ENCODE measurements at regions of chr21 and their contacts with region 1.

Region 1: GRCh38 chr21:31098576-31099005 is 60.3 kb upstream of the KRTAP19-8 start:
- DNase-seq: peak; percentile 18
- ATAC-seq: peak; percentile 95
- H3K4me3 ChIP-seq: no peak overlapping the region
- H3K27ac ChIP-seq: no peak overlapping the region
- H3K4me1 ChIP-seq: no peaks in the 10 kb centered on the region
- H3K27me3 ChIP-seq: no peaks in the 10 kb centered on the region
- CTCF ChIP-seq: peak; percentile 87
- EP300 ChIP-seq: no peak
- POLR2A ChIP-seq: no peak
- RAD21 ChIP-seq: peak; percentile 53; the same call in 1 of the 2 replicates

Region 2: DNA sequence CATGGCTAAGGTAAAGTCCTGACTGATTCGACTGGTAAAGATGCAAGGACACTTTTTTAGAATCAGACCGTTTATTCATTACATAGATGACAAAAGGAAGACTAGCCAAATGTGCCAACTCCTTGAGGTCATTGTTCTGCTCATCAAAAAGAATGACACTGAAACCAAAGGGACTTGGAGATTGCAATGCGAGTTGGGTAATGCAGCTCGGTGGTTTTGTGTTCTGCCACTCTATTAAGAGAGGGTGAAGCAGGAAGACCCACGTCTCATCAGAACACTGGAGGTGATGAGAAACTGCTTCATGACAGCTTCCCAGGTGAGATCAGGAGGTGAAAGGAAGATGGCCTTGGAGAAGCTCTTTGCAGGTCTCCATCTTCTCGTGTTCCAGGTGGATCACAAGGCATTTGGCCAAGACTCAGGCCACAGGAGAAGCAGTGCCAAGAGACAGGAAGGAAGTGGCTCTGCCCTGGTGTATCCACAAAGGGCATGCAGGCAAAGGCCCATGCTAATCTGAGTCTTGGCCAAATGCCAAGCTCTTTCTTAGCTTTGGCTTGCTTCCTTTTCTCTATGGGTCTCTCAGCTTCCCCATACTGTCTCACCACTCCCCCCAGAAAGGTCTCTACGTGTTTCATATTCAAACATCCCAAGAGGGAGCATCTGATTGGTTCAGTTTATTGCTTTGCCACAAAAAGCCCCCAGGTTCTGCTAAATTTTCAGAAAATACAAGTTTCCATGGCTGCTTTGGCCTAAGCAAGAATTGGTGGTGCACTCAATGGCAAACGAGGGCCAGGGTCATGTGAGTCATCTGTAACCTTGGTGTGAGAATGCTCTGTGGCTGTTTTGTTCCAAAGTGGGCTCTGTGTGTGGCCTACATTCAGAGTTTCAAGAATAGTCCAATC is 2019.5 kb before region 1 on chr21:
- CTCF ChIA-PET with region 1: no interaction called
- POLR2A ChIA-PET with region 1: no interaction called
- in situ Hi-C with region 1: loop called (anchors 25 kb)
- intact Hi-C with region 1: no loop called
- DNase-seq: no peak
- ATAC-seq: peak; percentile 78
- H3K4me3 ChIP-seq: no peak overlapping the region
- H3K27ac ChIP-seq: no peak overlapping the region
- H3K4me1 ChIP-seq: peaks cover 36% of the 10 kb centered on the region; the same call in 1 of the 2 replicates
- H3K27me3 ChIP-seq: no peaks in the 10 kb centered on the region; a peak in 1 of 5 replicates
- CTCF ChIP-seq: no peak
- EP300 ChIP-seq: no peak
- POLR2A ChIP-seq: no peak
- RAD21 ChIP-seq: no peak

Region 3: DNA sequence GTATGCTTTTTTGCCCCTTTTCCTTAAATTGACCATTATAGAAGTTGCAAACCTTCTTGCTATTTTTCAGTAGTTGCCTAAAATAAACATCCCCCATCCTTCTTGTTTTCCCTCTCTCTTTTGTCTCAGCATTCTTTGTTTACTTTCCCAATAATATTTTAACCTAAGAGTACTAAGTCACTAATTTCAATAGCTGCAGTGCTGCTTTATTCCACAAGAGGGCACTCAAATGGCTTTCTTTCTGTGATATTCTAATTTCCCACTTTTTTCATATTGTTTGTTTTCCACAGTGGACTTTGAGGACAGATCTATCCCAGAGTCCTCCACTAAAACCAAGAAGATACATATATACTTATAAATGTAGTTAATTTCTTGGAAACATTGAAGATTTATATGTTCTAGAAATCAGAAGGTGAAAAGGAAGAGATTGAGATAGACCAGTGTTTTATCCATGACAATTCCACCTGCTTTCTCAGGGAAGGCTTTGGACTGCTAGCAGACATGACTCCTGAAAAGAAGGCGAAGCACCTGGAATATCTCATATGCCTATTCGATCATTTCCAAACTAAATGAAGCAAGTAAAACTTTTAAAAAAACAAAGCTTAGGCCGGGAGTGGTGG is 1054.0 kb before region 1 on chr21:
- CTCF ChIA-PET with region 1: no interaction called
- POLR2A ChIA-PET with region 1: no interaction called
- in situ Hi-C with region 1: loop called (anchors 25 kb)
- intact Hi-C with region 1: no loop called
- DNase-seq: peak; percentile 1
- ATAC-seq: no peak
- H3K4me3 ChIP-seq: no peak overlapping the region
- H3K27ac ChIP-seq: no peak overlapping the region
- H3K4me1 ChIP-seq: no peaks in the 10 kb centered on the region
- H3K27me3 ChIP-seq: no peaks in the 10 kb centered on the region
- CTCF ChIP-seq: peak; percentile 37
- EP300 ChIP-seq: no peak
- POLR2A ChIP-seq: no peak
- RAD21 ChIP-seq: no peak

Region 4: DNA sequence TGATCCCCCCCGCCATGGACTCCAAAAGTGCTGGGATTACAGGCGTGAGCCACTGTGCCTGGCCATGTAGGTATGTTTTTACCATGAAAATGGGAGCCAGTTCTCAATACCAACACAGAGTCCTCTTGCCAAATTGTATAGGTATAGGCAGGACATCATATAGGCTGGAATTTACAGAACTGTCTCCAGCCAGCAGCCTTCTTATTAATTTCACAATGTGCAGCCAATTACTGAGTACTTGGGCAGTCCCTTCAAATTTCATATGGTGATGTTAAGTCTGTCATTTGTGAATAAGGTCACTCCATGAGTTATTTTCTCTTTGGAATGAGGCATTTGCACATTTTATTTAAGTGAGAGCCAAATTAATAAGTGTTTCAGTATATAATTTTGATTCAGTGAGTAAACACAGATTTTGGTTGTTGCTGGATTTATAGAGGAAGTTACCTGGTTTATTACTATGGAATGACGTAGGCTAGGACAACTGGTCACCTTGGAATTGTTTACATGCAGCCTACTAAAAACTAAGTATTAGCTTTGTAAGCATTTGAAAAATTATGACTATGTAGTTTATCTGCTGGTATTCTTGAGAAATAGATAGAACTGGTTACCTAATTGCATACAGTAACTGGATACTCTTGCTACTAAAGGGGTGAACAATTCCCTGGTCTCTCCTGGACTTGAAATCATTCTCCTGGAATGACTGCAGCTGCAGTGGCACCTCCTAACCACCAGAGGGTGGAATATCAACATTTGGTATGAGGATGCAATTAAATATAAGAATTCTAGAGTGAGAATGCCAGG is 758.0 kb before region 1 on chr21:
- CTCF ChIA-PET with region 1: no interaction called
- POLR2A ChIA-PET with region 1: no interaction called
- in situ Hi-C with region 1: loop called (anchors 25 kb)
- intact Hi-C with region 1: no loop called
- DNase-seq: peak; percentile 3
- ATAC-seq: no peak
- H3K4me3 ChIP-seq: no peak overlapping the region
- H3K27ac ChIP-seq: no peak overlapping the region
- H3K4me1 ChIP-seq: no peaks in the 10 kb centered on the region
- H3K27me3 ChIP-seq: no peaks in the 10 kb centered on the region
- CTCF ChIP-seq: peak; percentile 45
- EP300 ChIP-seq: no peak
- POLR2A ChIP-seq: no peak
- RAD21 ChIP-seq: no peak

Region 5: GRCh38 chr21:30592140-30592539 is 506.5 kb before region 1 on chr21 and contains the start of gene KRTAP6-3:
- CTCF ChIA-PET with region 1: no interaction called
- POLR2A ChIA-PET with region 1: no interaction called
- in situ Hi-C with region 1: no loop called
- intact Hi-C with region 1: no loop called
- DNase-seq: no peak
- ATAC-seq: no peak
- H3K4me3 ChIP-seq: no peak within 1 kb of the TSS
- H3K27ac ChIP-seq: no peak within 1 kb of the TSS
- H3K4me1 ChIP-seq: no peaks in the 10 kb centered on the region
- H3K27me3 ChIP-seq: no peaks in the 10 kb centered on the region
- CTCF ChIP-seq: no peak
- EP300 ChIP-seq: no peak
- POLR2A ChIP-seq: no peak
- RAD21 ChIP-seq: no peak
- total RNA-seq, gene KRTAP6-3: not detected in 2 replicates

Region 6: GRCh38 chr21:31088315-31088714 is 10.3 kb before region 1 on chr21:
- CTCF ChIA-PET with region 1: no interaction called
- POLR2A ChIA-PET with region 1: no interaction called
- in situ Hi-C with region 1: no loop called
- intact Hi-C with region 1: no loop called
- DNase-seq: no peak
- ATAC-seq: no peak
- H3K4me3 ChIP-seq: no peak overlapping the region
- H3K27ac ChIP-seq: no peak overlapping the region
- H3K4me1 ChIP-seq: peaks cover 7% of the 10 kb centered on the region; the same call in 1 of the 2 replicates
- H3K27me3 ChIP-seq: no peaks in the 10 kb centered on the region
- CTCF ChIP-seq: no peak
- EP300 ChIP-seq: no peak
- POLR2A ChIP-seq: no peak
- RAD21 ChIP-seq: no peak

Region 7: GRCh38 chr21:31180256-31181081 is 81.9 kb after region 1 on chr21:
- CTCF ChIA-PET with region 1: interaction called, 21 read pairs
- POLR2A ChIA-PET with region 1: no interaction called
- in situ Hi-C with region 1: loop called (anchors 5 kb)
- intact Hi-C with region 1: loop called (anchors 1 kb)
- DNase-seq: peak; percentile 13
- ATAC-seq: peak; percentile 70
- H3K4me3 ChIP-seq: no peak overlapping the region
- H3K27ac ChIP-seq: no peak overlapping the region
- H3K4me1 ChIP-seq: no peaks in the 10 kb centered on the region
- H3K27me3 ChIP-seq: no peaks in the 10 kb centered on the region
- CTCF ChIP-seq: peak; percentile 55
- EP300 ChIP-seq: no peak
- POLR2A ChIP-seq: no peak
- RAD21 ChIP-seq: no peak

Region 8: GRCh38 chr21:31604591-31605190 is 506.1 kb after region 1 on chr21:
- CTCF ChIA-PET with region 1: interaction called, 9 read pairs
- POLR2A ChIA-PET with region 1: no interaction called
- in situ Hi-C with region 1: loop called (anchors 10 kb)
- intact Hi-C with region 1: loop called (anchors 1 kb)
- DNase-seq: peak; percentile 41
- ATAC-seq: peak; percentile 88
- H3K4me3 ChIP-seq: no peak overlapping the region
- H3K27ac ChIP-seq: no peak overlapping the region
- H3K4me1 ChIP-seq: no peaks in the 10 kb centered on the region
- H3K27me3 ChIP-seq: no peaks in the 10 kb centered on the region
- CTCF ChIP-seq: peak; percentile 83
- EP300 ChIP-seq: no peak
- POLR2A ChIP-seq: no peak
- RAD21 ChIP-seq: 0 out of 2 replicates have a peak, but pooled peaks have one; percentile 17